ENCODE measurements at regions of chr13 and their contacts with region 1.

Region 1: GRCh38 chr13:46721054-46721453 is 75.9 kb downstream of the ESD start:
- DNase-seq: peak; percentile 18 to 65 (median 53)
- H3K4me3 ChIP-seq: no peak overlapping the region
- H3K27ac ChIP-seq: no peak overlapping the region
- H3K4me1 ChIP-seq: no peaks in the 10 kb centered on the region
- H3K27me3 ChIP-seq: no peaks in the 10 kb centered on the region
- CTCF ChIP-seq: peak; percentile 29 to 92 (median 75)
- EP300 ChIP-seq: no peak
- POLR2A ChIP-seq: no peak

Region 2: DNA sequence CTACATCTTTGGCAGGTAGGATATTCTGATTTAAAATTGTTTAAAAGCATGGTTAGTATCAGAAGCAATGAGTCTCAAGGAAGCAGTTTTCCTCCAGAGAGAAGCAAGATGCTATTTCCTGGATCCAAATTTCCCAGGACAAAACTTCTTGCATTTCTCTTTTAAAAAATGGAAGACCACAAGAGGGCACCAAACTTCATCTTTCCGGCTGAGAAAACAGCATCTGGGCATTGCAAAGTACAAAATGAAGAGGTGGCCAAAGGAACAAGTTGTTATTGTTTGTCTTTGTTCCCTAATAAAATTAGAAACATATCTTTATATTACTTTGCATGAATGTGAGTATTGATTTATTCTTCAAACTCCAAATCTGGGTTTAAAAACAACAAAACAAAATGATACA is 228.1 kb before region 1 on chr13:
- intact Hi-C with region 1: loop called (anchors 2 to 5 kb)
- DNase-seq: no peak
- H3K4me3 ChIP-seq: no peak overlapping the region
- H3K27ac ChIP-seq: no peak overlapping the region
- H3K4me1 ChIP-seq: no peaks in the 10 kb centered on the region
- H3K27me3 ChIP-seq: no peaks in the 10 kb centered on the region
- CTCF ChIP-seq: peak; percentile 38 to 63 (median 62)
- EP300 ChIP-seq: no peak
- POLR2A ChIP-seq: no peak

Region 3: DNA sequence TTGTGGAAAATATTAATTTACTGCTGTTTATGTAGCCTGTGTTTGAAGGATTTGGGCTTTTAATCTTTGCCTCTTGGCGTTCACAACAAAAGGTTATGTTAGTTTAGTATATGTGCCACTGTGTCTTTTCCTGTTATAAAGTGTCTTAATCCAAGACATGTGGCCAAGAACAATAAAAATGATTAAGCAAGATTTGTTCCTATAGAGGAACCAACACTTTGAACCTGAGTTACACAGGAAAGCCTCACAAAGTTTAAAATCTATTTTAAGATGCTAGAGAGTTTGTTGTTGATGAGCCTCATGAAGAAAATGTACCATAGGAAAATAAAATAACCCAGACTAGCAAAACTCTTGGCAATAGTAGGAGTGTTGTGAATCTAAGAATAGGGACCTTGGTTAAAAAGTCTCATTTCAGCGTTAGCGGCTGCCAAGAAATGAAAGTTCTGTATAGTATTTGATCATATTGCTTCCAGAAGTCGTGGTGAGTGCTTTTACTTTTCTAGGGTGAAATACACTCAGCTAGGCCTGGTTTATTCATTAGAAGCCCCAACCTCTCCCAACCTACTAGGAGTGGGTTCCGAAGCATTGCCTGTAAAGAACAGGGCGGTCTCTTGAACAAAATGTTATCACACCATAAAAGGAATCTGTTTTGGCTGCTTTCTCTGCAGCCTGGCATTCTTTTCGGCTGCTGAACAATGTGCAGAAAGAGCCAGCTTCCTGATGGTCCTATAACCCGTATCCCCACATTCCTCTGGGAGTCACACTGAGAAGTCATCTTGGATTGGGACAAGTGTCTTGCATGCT is 65.5 kb before region 1 on chr13:
- intact Hi-C with region 1: no loop called
- DNase-seq: no peak
- H3K4me3 ChIP-seq: no peak overlapping the region
- H3K27ac ChIP-seq: peak overlapping the region; percentile 12 to 64
- H3K4me1 ChIP-seq: peaks cover 6% of the 10 kb centered on the region
- H3K27me3 ChIP-seq: no peaks in the 10 kb centered on the region
- CTCF ChIP-seq: no peak
- EP300 ChIP-seq: no peak
- POLR2A ChIP-seq: no peak